Stomach (tissue), 19 donors: ENCODE measurements at regions of chr10 and their contacts with region 1.

Region 1: DNA sequence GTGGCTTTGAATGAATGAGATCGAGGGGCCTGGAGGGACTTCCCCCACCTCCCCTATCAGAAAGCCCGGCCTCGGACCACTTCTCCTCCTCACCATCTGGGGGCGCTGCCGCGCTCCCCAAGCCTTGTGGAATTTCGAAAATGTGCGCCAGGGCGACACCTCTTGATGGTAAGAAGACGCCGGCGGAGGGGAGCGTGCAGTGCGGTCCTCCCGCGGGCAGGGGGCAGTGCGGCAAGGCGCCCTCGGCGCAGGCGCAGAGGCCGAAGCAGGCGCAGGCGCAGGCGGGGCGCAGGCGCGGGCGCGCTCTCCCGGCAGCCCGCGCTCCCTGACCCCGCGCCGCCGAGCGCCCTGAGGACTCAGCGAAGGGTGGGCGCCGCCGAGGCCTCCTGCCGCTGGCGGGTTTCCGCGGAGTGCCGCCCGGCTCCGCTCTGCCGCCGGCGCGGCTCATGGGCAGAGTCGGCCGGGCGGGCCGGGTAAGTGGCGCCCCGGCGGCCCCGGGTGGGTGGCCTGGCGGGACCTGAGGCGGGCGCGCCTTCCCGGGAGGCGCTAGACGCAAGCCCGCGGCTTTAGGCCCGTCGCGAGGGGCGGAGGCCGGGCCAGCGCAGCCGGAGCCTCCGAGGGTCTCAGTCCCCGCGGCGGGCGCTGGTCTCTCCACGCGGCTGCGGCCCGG is at the start of gene RBM17:
- DNase-seq: peak; percentile 98 to 99
- H3K4me3 ChIP-seq: peak within 1 kb of the TSS; percentile 93 to 98 (median 95)
- H3K27ac ChIP-seq: peak within 1 kb of the TSS; percentile 72 to 95 (median 92)
- H3K4me1 ChIP-seq: peaks cover 30 to 67% (median 50%) of the 10 kb centered on the region in 4 donors
- H3K27me3 ChIP-seq: peaks cover 0 to 5% (median 0%) of the 10 kb centered on the region in 3 donors
- CTCF ChIP-seq: peak in 5 of 7 experiments; percentile 99 to 100 (median 100)
- EP300 ChIP-seq: no peak
- POLR2A ChIP-seq: no peak
- total RNA-seq, gene RBM17: 71.0 to 168 (median 105) TPM

Region 2: DNA sequence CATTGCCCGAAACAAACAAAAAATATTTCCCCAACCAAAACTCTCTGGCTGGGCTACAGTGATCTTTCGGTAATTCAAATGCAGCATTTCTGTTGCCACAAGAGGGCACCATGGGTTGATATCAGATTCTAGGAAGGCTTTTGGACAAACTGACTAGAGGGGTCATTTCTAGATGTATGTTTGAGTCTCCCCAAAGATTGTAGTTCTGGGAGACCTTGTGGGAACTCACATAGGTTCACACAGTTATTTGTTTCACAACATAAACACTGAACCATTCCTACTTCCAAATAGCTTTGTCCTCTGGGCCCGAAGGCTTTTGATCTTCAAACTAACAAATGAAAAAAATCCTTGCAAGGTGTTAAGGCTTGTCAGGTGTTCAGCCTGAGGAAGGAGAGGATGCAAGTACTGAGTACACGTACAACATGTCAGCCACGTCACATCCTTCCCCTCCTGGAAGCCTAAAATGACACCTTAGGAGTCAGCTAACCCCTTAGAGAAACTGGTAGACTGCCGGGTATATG is 74.6 kb before region 1 on chr10:
- intact Hi-C with region 1: loop called (anchors 10 kb)
- DNase-seq: peak; percentile 67 to 68
- H3K4me3 ChIP-seq: no peak overlapping the region
- H3K27ac ChIP-seq: peak overlapping the region in 2 of 5 donors; percentile 10 to 26
- H3K4me1 ChIP-seq: peaks cover 0 to 12% (median 9%) of the 10 kb centered on the region in 4 donors
- H3K27me3 ChIP-seq: no peaks in the 10 kb centered on the region
- CTCF ChIP-seq: peak in 5 of 7 experiments; percentile 50 to 83 (median 63)
- EP300 ChIP-seq: no peak
- POLR2A ChIP-seq: no peak